ENCODE measurements at regions of chr5 and their contacts with region 1.

Region 1: GRCh38 chr5:129852747-129853352 is 51.4 kb upstream of the CHSY3 start:
- DNase-seq: no peak
- H3K4me3 ChIP-seq: no peak overlapping the region
- H3K27ac ChIP-seq: no peak overlapping the region
- H3K4me1 ChIP-seq: no peaks in the 10 kb centered on the region
- H3K27me3 ChIP-seq: no peaks in the 10 kb centered on the region
- CTCF ChIP-seq: peak; percentile 61 to 66 (median 66)
- POLR2A ChIP-seq: no peak

Region 2: GRCh38 chr5:129884322-129884721 is 31.5 kb after region 1 on chr5:
- intact Hi-C with region 1: loop called (anchors 1 kb)
- DNase-seq: no peak
- H3K4me3 ChIP-seq: no peak overlapping the region
- H3K27ac ChIP-seq: no peak overlapping the region
- H3K4me1 ChIP-seq: no peaks in the 10 kb centered on the region
- H3K27me3 ChIP-seq: no peaks in the 10 kb centered on the region
- CTCF ChIP-seq: no peak
- POLR2A ChIP-seq: no peak